Breast epithelium (tissue), 4 donors: ENCODE measurements at regions of chr2 and their contacts with region 1.

Region 1: DNA sequence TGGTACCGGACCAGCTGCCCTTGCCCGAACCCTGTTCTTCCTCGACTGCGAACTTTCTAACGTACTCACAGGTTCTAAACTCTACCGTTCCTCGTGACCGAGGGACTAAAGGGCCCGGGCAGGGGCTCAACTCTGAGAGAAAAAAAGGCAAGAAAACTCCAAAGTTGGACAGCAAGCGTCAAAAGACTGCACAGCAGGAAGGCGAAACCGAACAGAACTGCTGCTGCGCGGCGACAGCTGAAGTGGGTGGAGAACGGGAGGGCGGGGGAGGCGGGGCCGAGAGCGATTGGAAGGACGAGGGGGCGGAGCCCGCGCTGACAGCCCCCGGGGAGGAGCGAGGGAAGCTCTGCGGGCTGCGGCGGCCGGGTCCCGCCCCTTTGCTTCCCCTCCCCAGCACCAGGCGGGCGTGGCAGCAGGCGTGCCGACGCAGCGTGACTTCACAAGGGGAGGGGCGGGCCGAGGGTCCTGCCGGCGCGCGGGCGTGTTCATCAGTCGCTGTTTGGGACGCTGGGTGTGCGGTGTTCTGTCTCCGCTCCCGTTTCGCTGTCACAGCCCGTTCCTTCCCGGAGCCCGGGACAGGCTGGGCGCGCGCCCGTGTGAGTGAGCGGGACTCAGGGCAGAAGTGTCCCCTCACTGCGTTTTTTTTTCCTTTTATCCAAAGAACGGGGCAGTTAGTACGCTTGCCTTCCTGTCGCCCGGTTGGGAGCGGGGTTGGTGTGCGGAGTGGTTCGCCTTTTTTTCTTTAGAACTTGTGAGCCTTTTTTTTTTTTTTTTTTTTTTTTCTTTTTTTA is at the start of gene NABP1:
- DNase-seq: peak; percentile 97 to 98
- H3K4me3 ChIP-seq: peak within 1 kb of the TSS; percentile 74 to 84 (median 77)
- H3K27ac ChIP-seq: peak within 1 kb of the TSS; percentile 91 to 94
- H3K4me1 ChIP-seq: no peaks in the 10 kb centered on the region
- H3K27me3 ChIP-seq: no peaks in the 10 kb centered on the region
- CTCF ChIP-seq: peak in 1 of 3 donors; percentile 6
- POLR2A ChIP-seq: peak; percentile 98
- total RNA-seq, gene NABP1: 34.4 to 44.9 (median 37.8) TPM

Region 2: GRCh38 chr2:191566344-191566743 is 111.5 kb before region 1 on chr2:
- intact Hi-C with region 1: loop called (anchors 10 kb)
- DNase-seq: peak in 1 of 2 donors; percentile 27
- H3K4me3 ChIP-seq: no peak overlapping the region
- H3K27ac ChIP-seq: no peak overlapping the region
- H3K4me1 ChIP-seq: no peaks in the 10 kb centered on the region
- H3K27me3 ChIP-seq: no peaks in the 10 kb centered on the region
- CTCF ChIP-seq: peak; percentile 50 to 65 (median 56)
- POLR2A ChIP-seq: no peak

Region 3: DNA sequence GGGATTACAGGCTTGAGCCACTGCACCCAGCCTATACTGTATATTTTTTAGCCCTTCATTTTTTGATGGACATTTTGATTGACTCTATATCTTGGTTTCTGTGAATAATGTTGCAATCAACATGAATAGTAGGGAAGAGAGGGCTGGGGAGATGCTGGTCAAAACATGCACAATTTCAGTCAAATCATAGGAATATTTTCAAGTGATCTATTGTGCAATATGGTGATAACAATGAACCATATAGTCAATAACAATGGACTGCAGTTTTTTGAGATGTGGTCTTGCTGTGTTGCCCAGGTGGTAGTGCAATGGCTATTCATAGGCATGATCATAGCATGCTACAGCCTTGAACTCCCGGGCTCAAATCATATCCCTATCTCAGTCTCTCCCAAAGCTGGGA is 781.6 kb after region 1 on chr2:
- intact Hi-C with region 1: loop called (anchors 5 kb)
- DNase-seq: no peak
- H3K4me3 ChIP-seq: no peak overlapping the region
- H3K27ac ChIP-seq: no peak overlapping the region
- H3K4me1 ChIP-seq: no peaks in the 10 kb centered on the region
- H3K27me3 ChIP-seq: no peaks in the 10 kb centered on the region
- CTCF ChIP-seq: no peak
- POLR2A ChIP-seq: no peak